Activated B cell treated with CpG ODN at 0.5 μM for 24 hours (primary cell): ENCODE measurements at regions of chrX and their contacts with region 1.

Region 1: DNA sequence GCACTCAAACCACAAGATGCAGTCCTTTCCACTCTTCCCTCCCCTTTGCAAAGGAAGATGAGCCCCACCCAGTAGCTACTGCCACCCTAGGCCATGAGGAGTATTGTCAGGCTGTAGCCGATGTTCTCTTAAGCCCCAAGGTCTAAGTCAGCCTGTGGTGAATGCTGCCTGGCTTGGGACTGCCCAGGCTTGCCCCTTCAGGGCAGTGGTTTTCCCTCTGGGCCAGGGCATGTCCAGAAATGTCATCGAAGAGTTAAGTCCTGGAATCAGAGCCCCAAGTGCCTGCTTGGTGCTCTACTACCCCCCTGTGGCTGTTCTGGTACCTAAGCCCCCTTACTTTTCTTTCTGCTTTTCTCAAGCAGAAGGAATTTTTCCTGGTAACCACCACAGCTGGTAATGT is 11.8 kb upstream of the PGK1 start:
- DNase-seq: no peak
- ATAC-seq: no peak
- H3K4me3 Mint-ChIP-seq: no peak overlapping the region
- H3K27ac Mint-ChIP-seq: no peak overlapping the region
- H3K4me1 Mint-ChIP-seq: no peaks in the 10 kb centered on the region
- H3K27me3 Mint-ChIP-seq: peaks cover 2% of the 10 kb centered on the region
- CTCF ChIP-seq: no peak

Region 2: GRCh38 chrX:76279000-76279399 is 1813.3 kb before region 1 on chrX:
- CTCF ChIA-PET with region 1: no interaction called
- POLR2A ChIA-PET with region 1: no interaction called
- intact Hi-C with region 1: loop called (anchors 10 kb)
- DNase-seq: no peak
- ATAC-seq: no peak
- H3K4me3 Mint-ChIP-seq: no peak overlapping the region
- H3K27ac Mint-ChIP-seq: no peak overlapping the region
- H3K4me1 Mint-ChIP-seq: no peaks in the 10 kb centered on the region
- H3K27me3 Mint-ChIP-seq: no peaks in the 10 kb centered on the region
- CTCF ChIP-seq: no peak

Region 3: GRCh38 chrX:78119521-78120227 is 27.4 kb after region 1 on chrX:
- CTCF ChIA-PET with region 1: no interaction called
- POLR2A ChIA-PET with region 1: no interaction called
- intact Hi-C with region 1: loop called (anchors 1 kb)
- DNase-seq: no peak
- ATAC-seq: no peak
- H3K4me3 Mint-ChIP-seq: no peak overlapping the region
- H3K27ac Mint-ChIP-seq: peak overlapping the region; percentile 32
- H3K4me1 Mint-ChIP-seq: peaks cover 19% of the 10 kb centered on the region
- H3K27me3 Mint-ChIP-seq: no peaks in the 10 kb centered on the region
- CTCF ChIP-seq: no peak